ENCODE measurements at regions of chr7 and their contacts with region 1.

Region 1: DNA sequence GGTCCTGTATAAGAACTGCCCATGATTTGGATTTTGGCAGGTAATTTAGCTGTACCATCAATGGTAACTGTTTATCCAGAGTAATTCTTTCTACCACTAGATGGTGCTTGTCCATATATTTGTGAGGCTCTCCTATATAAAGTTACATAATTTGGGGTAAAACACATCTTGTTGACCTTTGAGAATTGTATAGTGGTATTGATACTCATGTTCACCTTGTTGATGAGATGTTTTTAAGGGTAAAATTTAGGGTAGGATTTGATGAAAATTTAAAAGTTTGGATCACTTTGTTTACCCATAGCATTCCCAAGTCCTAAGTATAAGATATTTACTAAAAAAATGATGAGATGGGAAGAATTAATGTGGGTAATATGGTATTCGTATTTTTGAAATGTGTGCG is 31.6 kb downstream of the ST7 start:
- DNase-seq: peak; percentile 43 to 58 (median 56)
- H3K4me3 ChIP-seq: no peak overlapping the region
- H3K27ac ChIP-seq: no peak overlapping the region
- H3K4me1 ChIP-seq: no peaks in the 10 kb centered on the region
- H3K27me3 ChIP-seq: no peaks in the 10 kb centered on the region

Region 2: DNA sequence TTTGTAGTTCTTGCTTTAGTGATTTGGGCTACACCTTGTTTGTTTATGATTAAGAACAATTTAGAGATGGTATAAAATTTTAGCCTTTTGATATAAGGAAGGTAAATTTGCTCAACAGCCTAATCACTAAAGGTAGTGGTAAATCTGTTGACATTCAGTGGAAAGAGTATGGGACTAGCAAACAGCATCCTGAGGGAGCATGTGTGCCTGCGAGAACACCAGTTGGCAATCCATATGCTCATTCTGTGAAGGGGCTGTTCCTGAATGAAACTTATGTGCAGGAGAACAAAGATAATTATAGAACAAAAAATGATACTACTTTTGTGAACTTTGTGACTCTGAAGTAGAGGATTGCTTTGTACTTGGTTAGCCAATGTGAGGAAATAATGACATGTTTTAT is 78.5 kb before region 1 on chr7:
- CTCF ChIA-PET with region 1: no interaction called
- POLR2A ChIA-PET with region 1: no interaction called
- DNase-seq: no peak
- H3K4me3 ChIP-seq: no peak overlapping the region
- H3K27ac ChIP-seq: no peak overlapping the region
- H3K4me1 ChIP-seq: no peaks in the 10 kb centered on the region
- H3K27me3 ChIP-seq: no peaks in the 10 kb centered on the region

Region 3: DNA sequence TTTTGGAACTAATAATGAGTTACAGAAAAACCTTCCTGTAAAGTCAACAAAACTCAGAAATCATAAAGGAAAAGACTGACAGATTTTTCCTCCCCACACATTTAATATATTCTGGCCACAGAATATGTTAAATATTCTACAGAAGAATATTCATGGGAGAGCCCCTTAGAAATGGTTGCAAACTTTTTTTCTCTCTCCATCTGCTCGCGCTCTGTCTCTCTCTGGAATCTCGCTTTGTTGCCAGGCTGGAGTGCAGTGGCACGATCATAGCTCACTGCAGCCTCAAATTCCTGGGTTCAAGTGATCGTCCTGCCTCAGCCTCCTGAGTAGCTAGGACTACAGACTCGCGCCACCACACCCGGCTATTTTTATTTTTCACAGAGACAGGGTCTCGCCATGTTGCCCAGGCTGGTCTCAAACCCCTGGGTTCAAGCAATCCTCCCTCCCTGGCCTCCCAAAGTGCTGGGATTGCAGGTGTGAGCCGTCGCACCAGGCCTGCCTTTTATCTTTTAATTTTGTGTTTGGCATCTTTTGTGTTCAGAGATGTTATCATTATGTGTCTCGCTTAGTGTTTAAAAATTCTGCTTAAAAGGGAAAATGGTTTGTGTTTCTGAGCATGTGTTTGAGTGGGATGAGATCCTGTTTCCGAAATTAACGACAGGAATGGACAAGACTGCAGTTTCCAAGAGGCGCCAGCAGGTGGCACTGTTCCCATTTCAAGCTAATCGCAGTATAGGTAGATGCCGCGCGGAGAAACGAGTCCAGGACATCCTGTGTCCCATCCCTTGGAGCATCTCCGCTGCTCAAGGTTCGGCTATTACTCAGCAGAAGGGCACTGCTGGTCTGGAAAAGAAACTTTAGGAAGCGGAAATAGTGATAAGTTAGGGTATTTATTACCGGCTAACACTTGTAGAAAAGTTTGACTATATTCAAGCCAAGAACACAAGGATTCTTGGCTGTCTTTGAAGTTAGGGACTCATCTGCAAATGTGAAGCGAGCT is 54.7 kb before region 1 on chr7:
- CTCF ChIA-PET with region 1: interaction called, 12 read pairs
- POLR2A ChIA-PET with region 1: no interaction called
- DNase-seq: peak; percentile 66 to 79 (median 67)
- H3K4me3 ChIP-seq: peak overlapping the region in 1 of 7 experiments; percentile 48
- H3K27ac ChIP-seq: no peak overlapping the region
- H3K4me1 ChIP-seq: peaks cover 0 to 3% (median 0%) of the 10 kb centered on the region in 4 experiments
- H3K27me3 ChIP-seq: no peaks in the 10 kb centered on the region

Region 4: GRCh38 chr7:116999311-116999710 is 14.4 kb after region 1 on chr7:
- CTCF ChIA-PET with region 1: interaction called, 46 read pairs
- POLR2A ChIA-PET with region 1: no interaction called
- DNase-seq: no peak
- H3K4me3 ChIP-seq: no peak overlapping the region
- H3K27ac ChIP-seq: no peak overlapping the region
- H3K4me1 ChIP-seq: no peaks in the 10 kb centered on the region
- H3K27me3 ChIP-seq: no peaks in the 10 kb centered on the region

Region 5: DNA sequence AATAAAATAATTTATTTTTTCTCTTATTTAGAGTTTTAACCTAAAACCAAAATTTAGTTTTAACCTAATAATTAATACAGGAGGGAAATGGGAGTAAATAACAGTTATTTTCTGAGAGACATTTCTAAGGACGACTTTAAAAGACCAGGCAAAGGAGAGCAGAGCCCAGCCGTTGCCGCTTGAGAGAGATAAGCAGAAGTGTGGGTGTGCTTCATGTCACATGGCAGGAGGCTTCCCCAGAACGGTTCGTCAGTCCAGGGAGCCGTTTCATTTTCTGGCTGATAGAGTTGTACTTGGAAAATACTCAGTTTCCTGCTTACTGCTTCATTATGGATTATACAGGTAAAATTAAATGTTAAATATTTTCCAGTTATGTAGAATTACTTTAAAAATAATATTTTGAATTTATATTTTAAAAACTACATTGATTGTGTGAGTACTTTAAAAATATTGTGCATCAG is 29.8 kb after region 1 on chr7:
- CTCF ChIA-PET with region 1: interaction called, 87 read pairs
- POLR2A ChIA-PET with region 1: no interaction called
- DNase-seq: peak; percentile 64 to 89 (median 80)
- H3K4me3 ChIP-seq: peak overlapping the region in 3 of 7 experiments; percentile 12 to 57 (median 53)
- H3K27ac ChIP-seq: peak overlapping the region in 1 of 2 experiments; percentile 77
- H3K4me1 ChIP-seq: peaks cover 6 to 50% (median 31%) of the 10 kb centered on the region in 4 experiments
- H3K27me3 ChIP-seq: no peaks in the 10 kb centered on the region

Region 6: DNA sequence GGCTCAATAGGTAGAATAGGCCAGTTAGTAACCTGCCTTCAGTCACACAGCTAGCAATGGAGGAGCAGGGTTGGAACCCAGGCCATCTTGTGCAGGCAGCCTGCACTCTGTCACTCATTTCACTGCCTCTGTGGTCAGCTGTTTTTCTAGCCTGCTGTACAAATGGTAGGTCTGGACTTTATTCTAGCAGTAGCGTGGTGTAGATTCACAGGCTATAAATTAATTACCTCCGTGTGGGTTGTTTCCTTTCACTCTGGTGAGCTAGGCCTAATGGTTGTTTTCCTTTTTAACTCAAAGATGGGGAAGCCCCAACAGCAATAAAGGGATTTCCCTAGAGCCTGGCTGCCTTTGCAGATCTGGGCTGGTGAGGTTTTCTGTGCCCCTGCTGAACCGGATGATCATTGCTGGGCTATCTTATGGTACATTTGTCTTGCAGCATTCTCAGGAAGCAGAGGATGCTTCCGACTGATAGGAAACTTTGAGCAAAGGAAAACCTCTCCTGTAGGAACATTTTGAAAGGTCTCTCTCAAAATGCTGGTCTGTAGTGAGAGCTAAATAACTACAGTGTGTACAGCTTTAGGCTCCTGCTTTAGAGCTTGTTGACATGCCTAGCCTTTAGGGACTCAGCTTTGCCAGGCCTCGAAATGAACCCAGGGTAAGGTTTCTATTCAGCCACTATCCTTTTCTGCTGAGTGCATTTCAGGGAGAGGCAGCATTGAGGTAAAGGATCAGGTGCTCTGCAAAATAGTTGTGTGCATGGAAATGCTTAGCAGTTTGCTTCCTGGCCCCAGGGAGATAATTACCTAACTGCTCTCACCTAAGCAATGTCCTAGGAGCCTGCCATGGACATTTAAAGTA is 125.8 kb after region 1 on chr7:
- CTCF ChIA-PET with region 1: interaction called, 278 read pairs
- POLR2A ChIA-PET with region 1: no interaction called
- DNase-seq: peak; percentile 59 to 92 (median 89)
- H3K4me3 ChIP-seq: peak overlapping the region in 2 of 7 experiments; percentile 41 to 58
- H3K27ac ChIP-seq: peak overlapping the region; percentile 10 to 69
- H3K4me1 ChIP-seq: peaks cover 10 to 21% (median 17%) of the 10 kb centered on the region in 4 experiments
- H3K27me3 ChIP-seq: no peaks in the 10 kb centered on the region

Measured in common myeloid progenitor, CD34-positive (primary cell).